ENCODE measurements at regions of chr21 and their contacts with region 1.

Region 1: GRCh38 chr21:36927719-36928117 is 38.8 kb downstream of the HLCS start:
- DNase-seq: peak; percentile 65
- H3K27ac ChIP-seq: peak overlapping the region; percentile 78
- CTCF ChIP-seq: peak; percentile 93

Region 2: DNA sequence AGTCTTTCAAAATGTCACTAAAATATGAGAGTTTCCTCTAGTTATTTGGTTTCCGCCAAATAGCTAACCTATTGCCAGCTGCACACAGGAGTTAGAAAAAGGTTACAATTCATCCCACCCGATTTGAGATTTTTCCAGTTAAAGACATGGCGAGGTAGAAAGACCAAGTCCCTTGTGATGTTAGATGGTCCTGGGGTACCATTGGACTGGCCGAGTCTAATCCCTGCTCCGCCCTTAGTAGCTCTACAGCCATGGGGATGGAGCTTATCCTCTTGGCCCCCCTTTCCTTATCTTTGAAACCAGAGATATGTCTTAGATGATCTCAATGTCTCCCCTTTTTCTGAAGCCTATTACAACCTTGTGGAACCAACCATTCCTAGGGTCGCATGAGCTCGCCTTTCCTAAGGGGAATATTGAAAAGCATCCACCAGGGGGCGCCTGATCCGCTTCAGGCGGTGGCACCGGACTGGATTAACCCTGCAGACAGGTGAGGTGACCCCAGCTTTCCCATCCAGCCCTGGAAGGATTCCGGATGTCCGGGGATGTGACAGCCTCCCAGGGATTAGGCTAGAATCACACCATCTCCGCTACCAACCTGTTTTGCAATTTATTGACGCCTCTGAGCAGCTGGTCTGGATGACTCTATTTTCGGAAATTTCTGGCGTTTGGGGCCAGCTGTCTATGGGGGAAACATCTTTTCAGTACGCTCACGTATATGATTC is 297.1 kb before region 1 on chr21:
- CTCF ChIA-PET with region 1: interaction called, 12 read pairs
- POLR2A ChIA-PET with region 1: no interaction called
- DNase-seq: peak; percentile 74
- H3K27ac ChIP-seq: no peak overlapping the region
- CTCF ChIP-seq: peak; percentile 77

Region 3: DNA sequence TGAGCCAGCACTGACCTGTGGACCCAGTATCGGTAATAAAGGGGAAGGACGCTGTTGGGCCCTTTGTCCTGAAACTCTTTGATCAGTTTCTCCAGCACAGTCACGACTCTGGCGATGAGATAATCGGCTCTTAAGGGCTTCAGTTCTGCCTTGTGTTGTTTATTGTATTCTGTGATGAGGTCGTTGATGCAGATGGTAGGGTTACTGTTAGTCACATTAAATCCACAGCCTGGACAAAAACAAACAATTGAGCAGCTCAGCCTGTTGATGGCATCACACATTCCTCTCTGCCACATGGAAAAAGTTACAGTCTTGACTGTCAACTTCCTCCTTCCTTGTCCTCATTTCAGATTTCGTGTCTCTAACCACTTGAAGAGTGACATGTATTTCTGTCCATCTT is 171.2 kb before region 1 on chr21:
- CTCF ChIA-PET with region 1: interaction called, 4 read pairs
- POLR2A ChIA-PET with region 1: interaction called, 11 read pairs
- DNase-seq: no peak
- H3K27ac ChIP-seq: no peak overlapping the region
- CTCF ChIP-seq: no peak

Region 4: GRCh38 chr21:37101384-37101783 is 173.7 kb after region 1 on chr21:
- CTCF ChIA-PET with region 1: no interaction called
- POLR2A ChIA-PET with region 1: no interaction called
- DNase-seq: no peak
- H3K27ac ChIP-seq: no peak overlapping the region
- CTCF ChIP-seq: no peak

Measured in RWPE1 (cell line).